ENCODE measurements at regions of chr10 and their contacts with region 1.

Region 1: DNA sequence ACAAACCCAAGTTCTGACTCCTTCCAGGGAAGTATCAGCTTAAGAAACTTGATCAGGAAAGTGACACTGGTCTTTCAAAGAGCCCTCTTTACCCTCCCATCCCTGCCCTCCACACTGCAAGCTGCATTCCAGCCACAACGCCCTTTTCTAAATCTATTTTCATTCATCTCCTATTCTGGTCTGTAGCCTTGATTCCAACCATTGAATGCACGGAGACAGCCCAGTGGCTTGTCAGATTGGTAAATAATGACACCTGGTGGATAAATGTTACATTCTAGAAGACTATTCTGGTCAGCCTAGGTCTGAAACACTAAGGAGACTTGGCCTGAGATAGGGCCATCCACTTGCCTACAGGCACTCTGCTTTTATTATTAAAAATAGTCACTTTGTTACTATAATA is 20.9 kb downstream of the MORN4 start:
- DNase-seq: no peak
- ATAC-seq: peak; percentile 60 to 73

Region 2: GRCh38 chr10:97454330-97455036 is 157.9 kb before region 1 on chr10:
- intact Hi-C with region 1: loop called in 1 of 2 experiments (anchors 10 kb)
- DNase-seq: peak; percentile 37
- ATAC-seq: peak; percentile 37 to 85

Region 3: DNA sequence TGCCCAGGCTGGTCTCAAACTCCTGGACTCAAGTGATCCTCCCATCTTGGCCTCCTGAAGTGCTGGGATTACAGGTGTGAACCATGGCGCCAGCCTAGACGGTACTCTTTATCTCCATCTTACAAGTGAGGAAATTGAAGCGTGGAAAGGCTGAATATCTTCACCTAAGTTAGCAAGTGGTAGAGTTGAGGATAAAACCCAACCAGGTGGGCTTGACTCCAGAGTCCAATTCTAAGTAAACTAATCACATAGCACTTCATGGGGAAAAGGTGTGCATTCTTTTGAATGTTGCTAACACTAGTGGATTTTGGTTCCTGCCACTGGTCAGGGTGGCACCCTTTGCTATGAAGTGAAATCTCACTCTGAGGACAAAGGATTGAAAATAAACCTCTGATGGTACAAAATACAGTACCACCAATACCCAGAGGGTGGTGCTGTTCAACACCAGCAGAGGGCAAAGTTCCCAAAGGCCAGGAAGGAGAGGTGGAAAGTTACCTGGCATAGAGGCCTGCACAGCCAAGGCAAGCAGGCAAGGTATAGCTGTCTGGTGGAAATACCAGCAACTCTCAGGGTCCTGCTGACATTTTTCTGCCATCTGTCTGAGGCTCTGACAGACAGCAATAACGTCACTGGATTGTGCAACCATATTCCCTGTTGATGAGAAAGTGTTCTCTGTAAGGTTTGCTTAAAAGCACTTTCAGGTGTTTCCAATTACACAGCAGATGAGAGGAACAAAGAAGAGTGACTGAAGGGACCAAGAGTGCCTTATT is 148.8 kb before region 1 on chr10:
- intact Hi-C with region 1: loop called (anchors 10 kb)
- DNase-seq: no peak
- ATAC-seq: peak; percentile 39 to 60

Region 4: DNA sequence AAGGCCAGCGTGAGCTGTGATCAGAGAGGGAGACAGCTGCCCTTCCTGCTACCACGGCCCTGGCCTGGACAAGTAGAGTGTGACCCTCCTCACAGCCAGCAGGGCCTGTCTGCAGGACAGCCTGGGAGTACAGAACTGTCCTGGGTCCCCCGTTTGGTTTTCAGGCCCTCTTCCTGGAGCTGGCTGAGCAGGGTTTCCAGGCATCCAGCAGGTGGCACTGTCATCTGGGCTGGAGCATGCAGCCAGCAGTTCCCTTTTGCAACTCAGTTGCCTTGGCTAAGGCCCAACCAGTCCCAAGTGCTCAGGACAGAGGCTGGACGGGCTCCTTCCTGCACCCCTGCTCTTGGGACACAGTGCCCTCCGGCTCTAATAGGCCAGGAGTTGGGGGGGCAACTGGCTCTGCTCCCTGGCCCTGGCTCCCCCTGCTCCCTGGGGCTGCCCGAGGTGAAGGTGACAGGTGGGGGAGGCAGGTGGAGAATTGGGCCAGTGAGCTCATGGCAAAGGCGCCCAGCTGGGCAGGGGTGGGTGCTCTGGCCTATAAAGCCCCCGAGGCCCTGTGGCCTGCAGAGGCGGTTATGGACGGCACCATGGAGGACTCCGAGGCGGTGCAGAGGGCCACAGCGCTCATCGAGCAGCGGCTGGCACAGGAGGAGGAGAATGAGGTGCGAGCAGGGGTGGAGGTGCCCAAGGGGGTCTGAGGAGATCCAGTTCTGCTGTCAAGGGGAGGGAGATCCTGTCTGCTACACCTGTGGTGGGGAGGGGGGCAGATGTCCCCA is 40.0 kb before region 1 on chr10 and contains the start of gene ANKRD2:
- intact Hi-C with region 1: loop called (anchors 2 to 5 kb)
- DNase-seq: peak; percentile 90
- ATAC-seq: peak; percentile 71 to 82
- total RNA-seq, gene ANKRD2: 11.8 to 54.6 TPM